ENCODE measurements at regions of chr12 and their contacts with region 1.

Region 1: GRCh38 chr12:111396726-111397445 is 8.8 kb upstream of the SH2B3 start:
- DNase-seq: peak; percentile 81 to 90 (median 84)
- H3K4me3 ChIP-seq: no peak overlapping the region
- H3K4me3 Mint-ChIP-seq: peak overlapping the region in 6 of 7 donors; percentile 47 to 87 (median 77)
- H3K27ac ChIP-seq: peak overlapping the region; percentile 43
- H3K27ac Mint-ChIP-seq: peak overlapping the region in 4 of 8 donors; percentile 21 to 84 (median 43)
- H3K4me1 ChIP-seq: peaks cover 8% of the 10 kb centered on the region
- H3K4me1 Mint-ChIP-seq: peaks cover 6 to 21% (median 7%) of the 10 kb centered on the region in 3 donors
- H3K27me3 ChIP-seq: no peaks in the 10 kb centered on the region
- H3K27me3 Mint-ChIP-seq: peaks cover 0 to 5% of the 10 kb centered on the region in 2 donors

Region 2: DNA sequence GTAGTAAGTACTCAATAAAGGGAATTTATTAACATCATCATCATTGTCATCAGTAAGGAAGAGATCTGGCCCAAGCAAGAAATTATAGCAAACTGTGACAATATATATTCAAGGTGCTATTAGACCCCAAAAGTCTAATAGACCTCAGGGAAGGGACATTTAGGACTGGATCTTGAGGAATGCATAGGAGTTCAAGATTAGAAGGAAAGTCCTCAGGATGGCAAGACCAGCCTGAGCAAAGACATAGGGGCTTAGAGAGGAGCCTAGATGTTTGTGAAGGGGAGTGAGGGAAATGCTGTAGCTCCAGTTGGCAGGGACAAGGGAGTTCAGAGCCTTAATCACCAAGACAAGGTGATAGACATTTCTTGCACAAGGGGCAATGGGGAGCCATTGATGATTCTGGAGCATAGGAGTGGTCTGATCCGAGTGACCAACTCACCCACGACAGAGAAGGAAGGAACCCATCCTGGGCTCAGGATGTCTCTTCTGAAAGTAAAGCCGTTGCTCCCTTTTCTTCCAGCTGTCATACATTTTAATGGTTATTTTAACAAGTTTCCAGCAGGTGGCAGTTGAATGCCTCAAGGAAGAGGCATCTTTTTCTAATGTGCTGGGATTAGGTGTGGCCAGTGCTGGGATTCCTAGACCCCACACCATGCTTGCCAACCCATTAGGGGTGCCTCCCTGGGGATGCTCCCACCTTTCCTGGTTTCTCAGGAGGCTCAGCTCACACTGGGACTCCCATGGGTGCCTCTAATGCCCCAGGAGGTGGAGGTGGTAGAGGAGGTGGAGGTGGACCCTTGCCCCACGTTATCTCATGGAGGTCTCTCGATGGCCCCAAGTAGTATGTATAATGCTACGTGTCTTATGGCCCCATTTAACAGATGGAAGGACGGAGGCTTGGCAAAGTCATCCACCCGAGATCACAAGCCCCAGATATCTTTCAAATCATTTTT is 65.8 kb before region 1 on chr12:
- CTCF ChIA-PET with region 1: no interaction called
- POLR2A ChIA-PET with region 1: no interaction called
- DNase-seq: no peak
- H3K4me3 ChIP-seq: no peak overlapping the region
- H3K4me3 Mint-ChIP-seq: no peak overlapping the region
- H3K27ac ChIP-seq: no peak overlapping the region
- H3K27ac Mint-ChIP-seq: no peak overlapping the region
- H3K4me1 ChIP-seq: no peaks in the 10 kb centered on the region
- H3K4me1 Mint-ChIP-seq: no peaks in the 10 kb centered on the region
- H3K27me3 ChIP-seq: no peaks in the 10 kb centered on the region
- H3K27me3 Mint-ChIP-seq: peaks cover 8 to 25% of the 10 kb centered on the region in 2 donors

Region 3: GRCh38 chr12:111417784-111418593 is 21.1 kb after region 1 on chr12:
- CTCF ChIA-PET with region 1: interaction called, 32 read pairs
- POLR2A ChIA-PET with region 1: no interaction called
- DNase-seq: no peak
- H3K4me3 ChIP-seq: no peak overlapping the region
- H3K4me3 Mint-ChIP-seq: no peak overlapping the region
- H3K27ac ChIP-seq: no peak overlapping the region
- H3K27ac Mint-ChIP-seq: peak overlapping the region in 3 of 8 donors; percentile 23 to 73 (median 42)
- H3K4me1 ChIP-seq: peaks cover 20% of the 10 kb centered on the region
- H3K4me1 Mint-ChIP-seq: peaks cover 37 to 56% (median 38%) of the 10 kb centered on the region in 3 donors
- H3K27me3 ChIP-seq: no peaks in the 10 kb centered on the region
- H3K27me3 Mint-ChIP-seq: no peaks in the 10 kb centered on the region

Region 4: DNA sequence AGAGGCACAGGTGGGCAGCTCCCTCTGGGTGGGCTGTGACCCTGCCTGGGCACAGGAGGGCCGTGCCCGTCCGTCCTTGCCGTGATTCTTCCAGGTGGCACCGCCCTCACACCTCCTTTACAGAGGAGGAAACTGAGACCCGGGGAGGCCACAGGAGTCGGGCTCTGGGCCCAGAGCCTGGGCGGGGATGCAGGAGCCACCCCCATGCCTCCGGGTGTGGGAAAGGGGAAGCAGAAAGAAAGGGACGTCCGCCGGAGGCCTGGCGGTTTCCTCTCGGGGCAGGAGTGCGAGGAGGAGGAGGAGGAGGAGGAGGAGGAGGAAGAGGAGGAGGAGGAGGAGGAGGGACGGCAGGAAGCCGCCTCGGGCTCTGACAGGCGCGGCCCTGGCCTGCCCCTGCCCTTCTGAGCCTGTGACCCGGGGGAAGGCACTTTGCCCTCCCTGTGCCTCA is 31.9 kb after region 1 on chr12:
- CTCF ChIA-PET with region 1: interaction called, 1,032 read pairs
- POLR2A ChIA-PET with region 1: no interaction called
- DNase-seq: peak in 1 of 5 donors; percentile 46
- H3K4me3 ChIP-seq: no peak overlapping the region
- H3K4me3 Mint-ChIP-seq: peak overlapping the region; percentile 35 to 92 (median 74)
- H3K27ac ChIP-seq: peak overlapping the region; percentile 43
- H3K27ac Mint-ChIP-seq: peak overlapping the region; percentile 77 to 100 (median 94)
- H3K4me1 ChIP-seq: peaks cover 98% of the 10 kb centered on the region
- H3K4me1 Mint-ChIP-seq: peaks cover 83 to 95% (median 88%) of the 10 kb centered on the region in 3 donors
- H3K27me3 ChIP-seq: no peaks in the 10 kb centered on the region
- H3K27me3 Mint-ChIP-seq: no peaks in the 10 kb centered on the region

Region 5: GRCh38 chr12:111471236-111471635 is 74.3 kb after region 1 on chr12:
- CTCF ChIA-PET with region 1: interaction called, 13 read pairs
- POLR2A ChIA-PET with region 1: no interaction called
- DNase-seq: no peak
- H3K4me3 ChIP-seq: no peak overlapping the region
- H3K4me3 Mint-ChIP-seq: no peak overlapping the region
- H3K27ac ChIP-seq: no peak overlapping the region
- H3K27ac Mint-ChIP-seq: peak overlapping the region in 2 of 8 donors; percentile 41 to 75
- H3K4me1 ChIP-seq: no peaks in the 10 kb centered on the region
- H3K4me1 Mint-ChIP-seq: peaks cover 0 to 4% (median 0%) of the 10 kb centered on the region in 3 donors
- H3K27me3 ChIP-seq: no peaks in the 10 kb centered on the region
- H3K27me3 Mint-ChIP-seq: no peaks in the 10 kb centered on the region

Region 6: DNA sequence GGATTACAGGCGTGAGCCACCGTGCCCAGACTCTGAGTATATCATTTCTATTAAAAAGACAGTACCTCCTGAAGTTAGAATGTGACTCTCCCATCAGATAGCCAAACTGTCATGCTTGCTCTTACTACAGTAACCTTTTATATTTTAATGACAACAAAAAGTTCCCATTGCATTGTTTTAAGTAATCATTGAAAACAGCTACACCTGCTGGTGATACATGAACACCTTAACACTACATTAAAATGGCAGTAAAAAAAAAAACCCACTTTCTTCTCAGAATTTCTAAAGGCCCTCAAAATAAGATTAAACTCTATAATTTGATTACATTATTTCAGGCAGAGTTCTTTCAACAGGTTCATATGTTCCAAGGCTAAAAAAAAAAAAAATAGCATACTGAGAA is 85.6 kb after region 1 on chr12:
- CTCF ChIA-PET with region 1: interaction called, 20 read pairs
- POLR2A ChIA-PET with region 1: interaction called, 5 read pairs
- DNase-seq: no peak
- H3K4me3 ChIP-seq: no peak overlapping the region
- H3K4me3 Mint-ChIP-seq: no peak overlapping the region
- H3K27ac ChIP-seq: no peak overlapping the region
- H3K27ac Mint-ChIP-seq: peak overlapping the region in 3 of 8 donors; percentile 32 to 54 (median 43)
- H3K4me1 ChIP-seq: no peaks in the 10 kb centered on the region
- H3K4me1 Mint-ChIP-seq: no peaks in the 10 kb centered on the region
- H3K27me3 ChIP-seq: no peaks in the 10 kb centered on the region
- H3K27me3 Mint-ChIP-seq: no peaks in the 10 kb centered on the region

Region 7: DNA sequence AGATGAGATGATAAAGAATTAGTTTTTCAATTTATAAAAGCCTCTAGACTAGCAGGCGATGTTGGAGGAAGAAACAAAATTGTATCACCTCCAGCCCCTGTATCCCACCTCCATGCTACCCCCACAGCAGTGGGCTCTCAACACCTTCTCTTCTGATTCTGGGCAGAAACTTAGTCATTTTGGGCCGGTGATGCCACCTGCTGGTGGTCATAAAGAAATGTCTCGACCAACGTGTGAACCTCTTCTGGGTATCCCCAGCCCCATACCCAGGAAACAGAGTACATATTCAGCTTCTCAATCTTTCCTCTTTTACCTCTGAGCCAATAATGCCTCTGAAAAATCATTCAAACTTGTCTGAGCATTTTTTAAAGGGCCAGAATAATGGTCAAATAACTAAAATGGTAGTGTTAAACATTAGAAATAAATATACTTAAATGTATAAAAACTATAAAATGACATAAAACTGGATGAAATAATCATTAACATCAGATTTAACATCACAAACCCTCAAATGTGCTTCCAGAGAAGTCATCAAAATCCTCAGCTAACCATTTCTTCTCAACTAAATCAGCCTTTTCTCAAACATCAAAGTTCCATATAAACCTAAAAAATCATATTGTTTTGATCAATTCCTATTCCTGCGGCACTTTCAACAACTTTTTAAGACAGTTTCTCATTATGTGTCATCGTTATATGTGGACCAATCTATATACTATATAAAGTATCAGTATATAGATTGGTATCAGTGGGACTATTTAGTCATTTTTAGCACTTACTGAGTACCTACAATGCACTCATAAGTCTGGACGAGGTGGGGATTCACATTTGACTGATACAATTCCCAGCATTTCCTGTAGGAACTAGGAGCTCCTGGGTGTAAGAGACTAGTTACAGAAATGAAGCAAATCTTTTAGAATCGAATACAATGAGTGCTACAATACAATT is 132.8 kb after region 1 on chr12:
- CTCF ChIA-PET with region 1: interaction called, 75 read pairs
- POLR2A ChIA-PET with region 1: no interaction called
- DNase-seq: peak; percentile 37 to 75 (median 43)
- H3K4me3 ChIP-seq: no peak overlapping the region
- H3K4me3 Mint-ChIP-seq: no peak overlapping the region
- H3K27ac ChIP-seq: no peak overlapping the region
- H3K27ac Mint-ChIP-seq: peak overlapping the region in 5 of 8 donors; percentile 11 to 45 (median 44)
- H3K4me1 ChIP-seq: no peaks in the 10 kb centered on the region
- H3K4me1 Mint-ChIP-seq: peaks cover 0 to 7% (median 1%) of the 10 kb centered on the region in 3 donors
- H3K27me3 ChIP-seq: no peaks in the 10 kb centered on the region
- H3K27me3 Mint-ChIP-seq: no peaks in the 10 kb centered on the region